ENCODE measurements at regions of chr1 and their contacts with region 1.

Region 1: GRCh38 chr1:230430499-230430898 is 4.4 kb upstream of the PGBD5 start:
- DNase-seq: no peak
- H3K4me3 ChIP-seq: no peak overlapping the region
- H3K27ac ChIP-seq: no peak overlapping the region
- H3K4me1 ChIP-seq: no peaks in the 10 kb centered on the region
- H3K27me3 ChIP-seq: peaks cover 0 to 35% of the 10 kb centered on the region in 2 donors
- CTCF ChIP-seq: no peak
- POLR2A ChIP-seq: no peak

Region 2: DNA sequence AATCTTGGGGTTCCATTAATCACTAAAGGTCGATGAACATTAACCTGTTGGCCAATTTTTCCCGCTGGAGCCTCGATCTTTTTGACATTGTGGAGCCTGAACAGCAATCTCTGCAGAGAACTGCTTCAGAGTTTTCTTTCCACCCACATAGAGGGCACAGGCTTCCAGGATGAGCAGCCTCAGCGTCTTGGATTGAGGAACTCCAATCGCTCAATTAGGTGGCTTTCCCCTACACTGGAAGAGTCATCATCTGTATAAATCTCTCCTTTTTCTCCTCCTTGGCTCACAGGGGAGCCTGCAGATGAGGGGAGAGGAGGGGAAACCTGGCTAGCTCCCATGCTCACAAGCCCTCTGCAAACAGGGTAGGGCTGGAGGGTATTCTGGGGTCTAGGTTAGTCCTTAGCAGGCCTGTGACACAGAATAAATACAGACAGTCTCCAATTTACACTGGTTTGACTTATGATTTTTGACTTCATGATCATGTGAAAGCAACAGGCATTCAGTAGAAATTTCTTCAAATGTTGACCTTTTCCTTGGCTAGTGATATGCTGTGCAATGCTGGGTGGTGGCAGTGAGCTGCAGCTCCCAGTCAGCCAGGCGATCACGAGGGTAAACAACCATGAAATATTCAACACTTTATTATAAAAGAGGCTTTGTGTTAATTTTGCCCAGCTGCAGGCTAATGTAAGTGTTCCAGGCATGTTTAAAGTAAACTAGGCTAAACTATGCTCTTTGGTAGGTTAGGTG is 85.2 kb before region 1 on chr1:
- intact Hi-C with region 1: loop called (anchors 5 kb)
- DNase-seq: no peak
- H3K4me3 ChIP-seq: no peak overlapping the region
- H3K27ac ChIP-seq: no peak overlapping the region
- H3K4me1 ChIP-seq: no peaks in the 10 kb centered on the region
- H3K27me3 ChIP-seq: peaks cover 0 to 3% of the 10 kb centered on the region in 2 donors
- CTCF ChIP-seq: no peak
- POLR2A ChIP-seq: no peak

Measured in breast epithelium (tissue), 4 donors.